Left ventricle myocardium superior (tissue), 1 donor: ENCODE measurements at regions of chr17 and their contacts with region 1.

Region 1: DNA sequence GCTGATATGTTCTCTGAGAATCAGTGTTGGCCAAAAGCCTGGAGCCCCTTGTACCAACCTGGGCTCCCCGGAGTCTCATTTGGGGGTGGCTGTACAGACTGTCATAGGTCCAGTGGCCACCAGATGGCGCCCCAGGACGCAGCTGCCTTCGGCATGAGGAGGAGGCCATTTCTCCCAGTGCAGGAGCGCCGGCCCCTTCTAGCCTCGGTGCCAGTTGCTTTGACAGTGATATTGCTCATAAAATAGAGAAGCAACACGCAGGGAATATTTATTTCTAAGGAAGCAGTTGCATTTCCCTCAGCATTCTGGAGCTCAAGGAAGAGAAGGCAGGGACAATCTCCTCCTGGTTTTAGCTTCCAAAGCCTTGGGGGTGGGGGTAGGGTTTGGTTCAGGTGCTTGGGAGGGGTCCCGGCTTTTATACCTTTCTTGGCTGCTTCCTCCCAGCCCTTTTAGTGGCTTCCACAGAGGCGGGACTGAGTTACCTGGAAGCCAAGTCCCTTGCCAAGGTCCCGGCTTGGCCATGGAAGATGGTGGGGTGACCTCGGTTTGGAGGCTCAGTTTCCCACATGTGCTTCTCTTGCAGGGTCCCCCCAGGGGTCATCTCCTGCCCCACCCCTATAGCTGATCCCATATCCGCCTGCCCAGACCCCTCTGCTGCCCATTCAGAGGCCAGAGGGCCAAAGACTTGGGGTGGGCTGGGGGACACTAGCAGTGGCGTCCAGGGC is 117.8 kb upstream of the CDC42EP4 start:
- DNase-seq: peak; percentile 94
- ATAC-seq: peak; percentile 97

Region 2: GRCh38 chr17:73710095-73710592 is 280.5 kb after region 1 on chr17:
- intact Hi-C with region 1: loop called (anchors 10 kb)
- DNase-seq: peak; percentile 73
- ATAC-seq: peak; percentile 98